Aorta (tissue), 5 donors: ENCODE measurements at regions of chr4 and their contacts with region 1.

Region 1: GRCh38 chr4:185513489-185514181 is 21.7 kb downstream of the PDLIM3 start:
- DNase-seq: no peak
- ATAC-seq: peak; percentile 66
- H3K4me3 ChIP-seq: no peak overlapping the region
- H3K27ac ChIP-seq: peak overlapping the region in 1 of 2 donors; percentile 32
- H3K4me1 ChIP-seq: peaks cover 2 to 5% of the 10 kb centered on the region in 2 donors
- H3K27me3 ChIP-seq: no peaks in the 10 kb centered on the region

Region 2: DNA sequence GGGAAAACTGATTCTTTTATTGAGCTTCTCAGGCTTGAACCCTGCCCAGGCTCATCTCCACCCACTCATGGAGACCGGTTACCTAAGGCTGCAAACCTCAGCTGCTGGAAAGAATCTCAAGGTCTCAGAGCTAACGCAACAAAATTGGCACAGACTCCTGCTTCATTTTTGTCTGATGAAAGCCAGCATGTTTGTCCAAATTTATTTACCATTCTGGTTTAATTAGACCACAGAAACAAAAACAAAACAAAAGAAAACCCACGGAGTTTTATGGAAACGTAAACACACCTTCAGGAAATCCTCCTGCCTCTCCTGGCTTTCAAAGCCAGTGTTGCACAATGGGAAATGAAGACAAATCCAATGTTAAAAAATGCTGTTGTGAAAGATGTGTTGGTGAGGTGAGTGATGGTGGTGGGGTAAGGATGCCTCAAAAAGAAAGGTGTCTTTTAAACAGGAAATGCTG is 78.1 kb after region 1 on chr4:
- intact Hi-C with region 1: loop called in 1 of 2 experiments (anchors 5 kb)
- DNase-seq: no peak
- ATAC-seq: no peak
- H3K4me3 ChIP-seq: no peak overlapping the region
- H3K27ac ChIP-seq: peak overlapping the region in 1 of 2 donors; percentile 7
- H3K4me1 ChIP-seq: peaks cover 0 to 5% of the 10 kb centered on the region in 2 donors
- H3K27me3 ChIP-seq: no peaks in the 10 kb centered on the region